AG04449 (cell line): ENCODE measurements at regions of chr6 and their contacts with region 1.

Region 1: GRCh38 chr6:42279144-42279781 is 61.6 kb upstream of the MRPS10 start:
- DNase-seq: no peak
- H3K4me3 ChIP-seq: no peak overlapping the region
- CTCF ChIP-seq: no peak

Region 2: DNA sequence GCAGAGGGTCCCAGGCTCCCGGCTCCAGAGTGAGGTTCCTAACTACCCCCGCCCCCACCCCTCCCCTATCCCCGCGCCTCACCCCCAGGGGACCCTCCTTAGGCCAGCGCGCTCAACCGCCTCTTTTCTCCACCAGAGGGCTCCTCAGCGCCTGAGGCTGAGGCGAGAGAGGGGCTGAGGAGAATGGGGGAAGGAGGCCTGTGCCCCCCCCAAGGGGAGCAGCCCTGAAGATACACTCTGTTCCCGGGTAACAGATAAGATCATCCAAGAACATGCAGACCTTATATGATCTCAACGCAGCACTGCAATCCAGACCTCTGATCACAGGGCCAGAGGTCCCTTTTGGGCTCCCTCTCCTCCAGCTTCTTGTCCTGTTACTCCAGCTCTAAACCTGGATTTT is 18.3 kb before region 1 on chr6:
- CTCF ChIA-PET with region 1: interaction called, 10 read pairs
- POLR2A ChIA-PET with region 1: no interaction called
- DNase-seq: no peak
- H3K4me3 ChIP-seq: no peak overlapping the region
- CTCF ChIP-seq: peak; percentile 74

Region 3: GRCh38 chr6:42819803-42820511 is 540.7 kb after region 1 on chr6:
- CTCF ChIA-PET with region 1: no interaction called
- POLR2A ChIA-PET with region 1: no interaction called
- DNase-seq: no peak
- H3K4me3 ChIP-seq: no peak overlapping the region
- CTCF ChIP-seq: no peak